ENCODE measurements at regions of chr1 and their contacts with region 1.

Region 1: DNA sequence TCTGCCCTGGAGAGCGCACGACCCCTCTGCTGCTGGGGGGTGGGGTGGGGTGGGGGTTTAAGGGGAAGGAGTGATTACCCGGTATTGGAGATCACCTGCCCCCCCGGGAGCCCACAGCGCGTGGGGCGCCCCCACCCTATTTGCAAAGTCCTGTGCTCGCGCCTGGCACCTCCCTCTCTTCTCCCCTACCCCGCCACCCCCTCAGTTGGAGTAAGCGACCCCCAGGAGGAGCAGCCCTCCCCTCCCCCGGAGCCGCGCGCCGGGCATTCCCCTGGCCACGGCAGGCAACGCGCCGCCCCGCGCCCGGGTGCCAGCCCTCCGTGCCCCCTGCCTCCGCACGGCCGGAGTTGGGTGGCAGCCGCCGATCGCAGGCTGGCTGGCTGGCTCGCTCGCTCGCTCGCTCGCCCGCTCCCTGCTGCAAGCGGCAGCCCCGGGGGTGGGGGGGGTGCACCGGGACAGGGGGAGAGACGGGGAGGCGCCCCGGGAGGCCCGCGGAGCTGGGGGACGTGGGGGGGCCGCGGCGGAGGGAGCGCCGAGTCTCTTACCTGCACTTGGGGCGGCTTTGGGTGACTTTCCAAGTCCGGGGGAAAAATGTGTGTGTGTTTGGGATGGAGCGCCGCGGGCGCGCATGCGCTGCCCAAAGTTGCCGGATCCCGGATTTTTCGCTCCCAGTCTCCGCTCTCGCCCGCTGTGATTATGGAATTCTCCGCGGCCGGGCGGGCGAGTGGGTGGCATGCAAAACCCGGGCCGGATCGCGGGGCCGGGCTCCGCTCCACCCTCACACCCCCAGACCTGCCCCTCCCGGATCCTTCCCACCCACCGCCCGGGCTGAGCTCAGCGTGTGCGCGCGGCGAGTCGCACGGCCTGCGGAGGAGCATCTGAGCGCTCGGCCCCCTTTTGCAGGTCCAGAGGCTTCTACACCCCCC is at the start of gene CASZ1:
- DNase-seq: peak; percentile 67 to 89
- H3K4me3 ChIP-seq: peak within 1 kb of the TSS; percentile 78
- H3K27ac ChIP-seq: no peak within 1 kb of the TSS
- H3K4me1 ChIP-seq: peaks cover 17% of the 10 kb centered on the region
- H3K27me3 ChIP-seq: no peaks in the 10 kb centered on the region
- CTCF ChIP-seq: no peak
- total RNA-seq, gene CASZ1: 15.2 and 18.9 TPM in 2 replicates

Region 2: GRCh38 chr1:10679496-10680220 is 116.6 kb before region 1 on chr1:
- CTCF ChIA-PET with region 1: no interaction called
- POLR2A ChIA-PET with region 1: no interaction called
- intact Hi-C with region 1: loop called (anchors 1 kb)
- DNase-seq: peak in 1 of 2 experiments; percentile 49
- H3K4me3 ChIP-seq: no peak overlapping the region
- H3K27ac ChIP-seq: no peak overlapping the region
- H3K4me1 ChIP-seq: no peaks in the 10 kb centered on the region
- H3K27me3 ChIP-seq: no peaks in the 10 kb centered on the region
- CTCF ChIP-seq: no peak

Region 3: GRCh38 chr1:10765734-10766478 is 30.4 kb before region 1 on chr1:
- CTCF ChIA-PET with region 1: interaction called, 13 read pairs
- POLR2A ChIA-PET with region 1: interaction called, 4 read pairs
- intact Hi-C with region 1: no loop called
- DNase-seq: no peak
- H3K4me3 ChIP-seq: no peak overlapping the region
- H3K27ac ChIP-seq: no peak overlapping the region
- H3K4me1 ChIP-seq: peaks cover 25% of the 10 kb centered on the region
- H3K27me3 ChIP-seq: no peaks in the 10 kb centered on the region
- CTCF ChIP-seq: no peak

Region 4: DNA sequence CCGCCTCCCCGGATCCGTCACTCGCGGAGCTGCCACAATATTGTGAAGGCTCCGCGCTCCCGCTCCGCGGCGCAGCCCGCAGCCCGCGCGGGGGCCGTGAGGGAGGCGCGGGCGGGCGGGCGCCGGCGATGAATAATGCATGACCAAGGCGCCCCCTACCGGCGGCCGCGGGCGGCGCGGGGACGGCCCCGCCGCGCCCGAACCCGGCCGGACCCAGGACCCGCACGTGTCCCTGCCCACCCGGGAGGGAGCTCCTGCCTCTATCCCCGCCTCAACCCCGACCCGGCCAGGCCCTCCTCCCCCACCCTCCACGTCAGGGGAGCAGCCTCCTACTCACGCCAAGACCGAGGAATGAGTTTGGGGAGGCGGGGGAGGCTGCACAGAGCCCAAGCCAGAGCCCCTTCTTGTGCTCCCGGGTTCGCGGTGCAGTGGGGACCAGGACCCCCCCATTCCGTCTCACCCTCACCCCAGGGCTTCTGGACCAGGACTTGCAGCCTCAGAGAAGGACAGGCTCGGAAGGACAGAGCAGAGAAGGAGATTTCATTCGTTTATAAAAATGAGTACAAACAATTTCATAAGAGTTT is 70.9 kb after region 1 on chr1:
- CTCF ChIA-PET with region 1: interaction called, 15 read pairs
- POLR2A ChIA-PET with region 1: no interaction called
- intact Hi-C with region 1: no loop called
- DNase-seq: peak in 1 of 2 experiments; percentile 60
- H3K4me3 ChIP-seq: peak overlapping the region; percentile 51; the same call in 1 of the 2 replicates
- H3K27ac ChIP-seq: no peak overlapping the region
- H3K4me1 ChIP-seq: no peaks in the 10 kb centered on the region
- H3K27me3 ChIP-seq: no peaks in the 10 kb centered on the region
- CTCF ChIP-seq: peak; percentile 51; the same call in 1 of the 2 replicates

Region 5: DNA sequence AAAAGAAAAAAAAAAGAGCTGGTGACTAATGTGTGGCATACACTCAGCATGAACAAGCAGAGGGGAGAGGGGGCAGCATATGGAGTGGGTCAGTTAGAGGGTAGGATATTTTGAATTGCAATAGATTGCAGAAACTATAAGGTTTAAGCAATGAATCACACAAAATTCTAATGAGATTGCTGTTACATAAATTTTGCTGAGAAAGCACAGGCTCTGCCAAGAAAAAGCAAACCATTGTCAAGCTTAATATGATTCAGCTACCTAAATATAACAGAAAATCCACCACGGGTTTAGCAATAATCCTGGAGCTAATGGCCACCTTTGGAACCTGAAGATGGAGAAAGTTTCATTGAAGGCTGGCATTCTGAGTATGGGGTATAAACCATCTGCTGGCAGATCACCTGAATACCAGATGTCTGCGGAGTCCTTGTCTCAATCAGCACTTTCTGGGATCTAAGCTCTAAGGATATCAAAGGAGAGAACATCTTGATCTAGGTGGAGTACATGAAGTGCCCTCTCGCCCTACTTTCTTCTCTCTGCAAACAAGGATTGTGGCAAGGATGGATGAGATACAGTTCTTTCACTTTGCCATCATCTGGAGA is 362.5 kb after region 1 on chr1:
- CTCF ChIA-PET with region 1: no interaction called
- POLR2A ChIA-PET with region 1: no interaction called
- intact Hi-C with region 1: no loop called
- DNase-seq: peak in 1 of 2 experiments; percentile 81
- H3K4me3 ChIP-seq: no peak overlapping the region
- H3K27ac ChIP-seq: peak overlapping the region; percentile 76
- H3K4me1 ChIP-seq: peaks cover 13% of the 10 kb centered on the region
- H3K27me3 ChIP-seq: no peaks in the 10 kb centered on the region
- CTCF ChIP-seq: no peak

Measured in PC-9 (cell line).